ENCODE measurements at regions of chr6 and their contacts with region 1.

Region 1: DNA sequence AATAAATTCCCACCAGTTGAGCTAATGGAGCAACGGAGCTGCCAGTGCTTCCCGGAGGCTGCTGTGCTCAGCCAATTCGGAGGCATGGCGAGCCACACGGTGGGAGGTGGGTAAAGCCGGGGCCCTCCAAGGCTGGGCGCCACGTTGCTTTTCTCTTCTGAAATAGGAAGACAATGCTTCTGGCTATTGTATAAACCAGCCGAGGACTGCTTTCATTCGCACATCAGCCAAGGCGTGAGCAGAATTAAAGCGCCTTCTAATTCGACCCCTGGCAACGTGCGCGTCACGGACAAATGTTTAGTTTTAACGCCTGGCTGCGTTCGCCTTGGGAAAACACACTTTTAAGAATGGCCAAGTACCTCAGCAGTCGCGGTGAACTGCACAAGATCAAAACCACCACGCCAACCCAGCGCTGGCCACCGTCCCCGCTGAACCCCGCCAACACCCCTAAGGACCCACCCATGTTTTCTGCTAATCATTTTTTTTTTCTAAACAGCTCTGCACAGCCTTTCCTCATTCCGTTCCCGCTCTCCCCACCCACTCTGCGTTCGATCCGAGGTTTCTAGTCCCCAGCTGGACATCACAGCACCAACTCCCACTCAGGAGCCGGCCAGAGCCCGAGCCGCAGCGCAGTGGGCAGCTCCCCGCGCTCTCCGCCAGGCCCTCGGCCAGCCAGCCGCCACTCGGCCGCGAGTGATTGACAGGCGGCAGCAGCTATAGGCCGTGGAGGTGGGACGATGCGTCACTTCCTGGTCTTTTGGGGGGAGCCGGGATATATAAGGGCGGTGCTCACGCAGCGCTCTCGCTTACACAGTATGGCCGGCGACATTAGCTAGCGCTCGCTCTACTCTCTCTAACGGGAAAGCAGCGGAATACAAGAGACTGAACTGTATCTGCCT is at the start of gene AMD1:
- DNase-seq: peak; percentile 98
- CTCF ChIP-seq: no peak

Region 2: GRCh38 chr6:110815217-110816109 is 58.8 kb before region 1 on chr6 and contains the start of gene CDK19:
- CTCF ChIA-PET with region 1: interaction called, 4 read pairs
- POLR2A ChIA-PET with region 1: interaction called, 123 read pairs
- DNase-seq: peak; percentile 93
- CTCF ChIP-seq: no peak

Region 3: GRCh38 chr6:110856296-110856695 is 17.9 kb before region 1 on chr6:
- CTCF ChIA-PET with region 1: interaction called, 4 read pairs
- POLR2A ChIA-PET with region 1: interaction called, 11 read pairs
- DNase-seq: no peak
- CTCF ChIP-seq: no peak

Region 4: DNA sequence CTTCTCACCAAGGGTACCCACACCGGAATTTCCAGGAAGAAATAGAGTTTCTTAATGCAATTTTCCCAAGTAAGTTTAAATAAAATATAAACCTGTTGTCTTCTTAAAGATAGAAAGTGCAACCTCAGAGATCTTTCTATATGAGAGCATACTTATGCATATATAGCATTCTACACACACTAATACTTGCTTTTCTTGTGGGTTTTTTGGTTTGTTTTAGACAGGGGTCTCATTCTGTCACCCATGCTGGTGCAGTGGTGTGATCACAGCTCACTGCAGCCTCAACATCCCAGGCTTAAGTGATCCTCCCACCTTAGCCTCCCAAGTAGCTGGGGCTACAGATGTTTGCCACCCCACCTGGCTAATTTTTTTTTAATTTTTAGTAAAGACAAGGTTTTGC is 16.1 kb after region 1 on chr6:
- CTCF ChIA-PET with region 1: interaction called, 45 read pairs
- POLR2A ChIA-PET with region 1: interaction called, 26 read pairs
- DNase-seq: no peak
- CTCF ChIP-seq: no peak

Region 5: GRCh38 chr6:110944681-110945151 is 70.5 kb after region 1 on chr6:
- CTCF ChIA-PET with region 1: interaction called, 7 read pairs
- POLR2A ChIA-PET with region 1: interaction called, 24 read pairs
- DNase-seq: peak; percentile 82
- CTCF ChIP-seq: no peak

Region 6: GRCh38 chr6:110981202-110981600 is 107.0 kb after region 1 on chr6:
- CTCF ChIA-PET with region 1: interaction called, 3 read pairs
- POLR2A ChIA-PET with region 1: interaction called, 16 read pairs
- DNase-seq: no peak
- CTCF ChIP-seq: no peak

Measured in GM10248 (cell line).